CD4-positive, alpha-beta T cell (primary cell): ENCODE measurements at regions of chr1 and their contacts with region 1.

Region 1: GRCh38 chr1:38973659-38974424 is 17.2 kb upstream of the AKIRIN1 start:
- DNase-seq: no peak
- ATAC-seq: no peak
- H3K4me3 ChIP-seq: no peak overlapping the region
- H3K4me3 Mint-ChIP-seq: no peak overlapping the region
- H3K27ac ChIP-seq: no peak overlapping the region
- H3K27ac Mint-ChIP-seq: no peak overlapping the region
- H3K4me1 ChIP-seq: peaks cover 22% of the 10 kb centered on the region
- H3K4me1 Mint-ChIP-seq: peaks cover 17% of the 10 kb centered on the region
- H3K27me3 ChIP-seq: no peaks in the 10 kb centered on the region
- H3K27me3 Mint-ChIP-seq: no peaks in the 10 kb centered on the region
- CTCF ChIP-seq: no peak

Region 2: GRCh38 chr1:38873027-38873969 is 100.5 kb before region 1 on chr1 and contains the start of gene MYCBP:
- CTCF ChIA-PET with region 1: no interaction called
- POLR2A ChIA-PET with region 1: interaction called, 11 read pairs
- intact Hi-C with region 1: no loop called
- DNase-seq: peak; percentile 94 to 99 (median 97)
- ATAC-seq: peak; percentile 99
- H3K4me3 ChIP-seq: peak within 1 kb of the TSS; percentile 71
- H3K4me3 Mint-ChIP-seq: peak within 1 kb of the TSS; percentile 93
- H3K27ac ChIP-seq: peak within 1 kb of the TSS; percentile 13 to 73
- H3K27ac Mint-ChIP-seq: peak within 1 kb of the TSS; percentile 90
- H3K4me1 ChIP-seq: peaks cover 17% of the 10 kb centered on the region
- H3K4me1 Mint-ChIP-seq: peaks cover 34% of the 10 kb centered on the region
- H3K27me3 ChIP-seq: no peaks in the 10 kb centered on the region
- H3K27me3 Mint-ChIP-seq: no peaks in the 10 kb centered on the region
- CTCF ChIP-seq: no peak
- total RNA-seq, gene MYCBP: 1.5 to 2.2 TPM

Region 3: DNA sequence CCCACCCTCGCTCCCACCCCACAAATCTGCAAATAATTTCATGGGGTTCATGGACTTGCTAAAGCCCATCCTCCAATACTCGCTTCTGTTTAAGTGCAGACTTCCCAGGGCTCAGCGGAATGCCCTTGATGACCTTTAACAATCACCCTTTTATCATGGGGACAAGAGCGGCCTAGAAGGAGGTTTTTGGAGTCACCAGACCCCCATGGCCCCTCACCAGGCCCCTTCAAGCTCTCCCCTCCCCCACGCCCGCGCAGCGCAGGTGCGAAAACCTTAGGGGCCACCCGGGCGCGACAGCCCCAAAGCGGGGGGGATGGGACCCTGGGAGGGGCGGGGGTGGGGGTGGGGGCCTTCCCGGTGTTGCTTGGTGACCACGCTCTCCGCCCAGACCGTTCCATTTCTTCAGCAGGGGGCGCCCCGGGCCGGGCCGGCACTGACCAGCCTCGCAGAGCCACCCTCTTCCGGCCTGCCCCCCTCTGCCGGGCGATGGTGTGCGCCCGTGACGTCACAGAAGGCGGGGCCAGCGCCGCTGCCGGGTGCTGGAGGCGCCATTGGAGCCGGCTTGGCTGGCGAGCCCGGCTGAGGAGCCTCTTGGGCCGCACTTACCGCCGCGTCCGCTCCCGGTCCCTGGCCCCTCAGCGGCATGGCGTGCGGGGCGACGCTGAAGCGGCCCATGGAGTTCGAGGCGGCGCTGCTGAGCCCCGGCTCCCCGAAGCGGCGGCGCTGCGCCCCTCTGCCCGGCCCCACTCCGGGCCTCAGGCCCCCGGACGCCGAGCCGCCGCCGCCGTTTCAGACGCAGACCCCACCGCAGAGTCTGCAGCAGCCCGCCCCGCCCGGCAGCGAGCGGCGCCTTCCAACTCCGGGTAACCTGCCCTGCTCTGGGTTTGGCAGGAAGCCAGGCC is 17.1 kb after region 1 on chr1 and contains the start of gene AKIRIN1:
- CTCF ChIA-PET with region 1: interaction called, 4 read pairs
- POLR2A ChIA-PET with region 1: interaction called, 30 read pairs
- intact Hi-C with region 1: loop called (anchors 1 to 2 kb)
- DNase-seq: peak; percentile 82 to 96 (median 92)
- ATAC-seq: peak; percentile 84
- H3K4me3 ChIP-seq: peak within 1 kb of the TSS; percentile 91
- H3K4me3 Mint-ChIP-seq: peak within 1 kb of the TSS; percentile 90
- H3K27ac ChIP-seq: peak within 1 kb of the TSS; percentile 83 to 89
- H3K27ac Mint-ChIP-seq: peak within 1 kb of the TSS; percentile 81
- H3K4me1 ChIP-seq: peaks cover 36% of the 10 kb centered on the region
- H3K4me1 Mint-ChIP-seq: peaks cover 43% of the 10 kb centered on the region
- H3K27me3 ChIP-seq: no peaks in the 10 kb centered on the region
- H3K27me3 Mint-ChIP-seq: no peaks in the 10 kb centered on the region
- CTCF ChIP-seq: no peak
- total RNA-seq, gene AKIRIN1: 108 to 112 TPM

Region 4: GRCh38 chr1:38997034-38997900 is 23.4 kb after region 1 on chr1:
- CTCF ChIA-PET with region 1: interaction called, 4 read pairs
- POLR2A ChIA-PET with region 1: interaction called, 30 read pairs
- intact Hi-C with region 1: loop called in 1 of 2 experiments (anchors 1 kb)
- DNase-seq: peak in 3 of 14 experiments; percentile 38 to 78 (median 42)
- ATAC-seq: peak; percentile 80
- H3K4me3 ChIP-seq: peak overlapping the region; percentile 10
- H3K4me3 Mint-ChIP-seq: peak overlapping the region; percentile 81
- H3K27ac ChIP-seq: peak overlapping the region; percentile 31 to 42
- H3K27ac Mint-ChIP-seq: peak overlapping the region; percentile 87
- H3K4me1 ChIP-seq: peaks cover 57% of the 10 kb centered on the region
- H3K4me1 Mint-ChIP-seq: peaks cover 71% of the 10 kb centered on the region
- H3K27me3 ChIP-seq: no peaks in the 10 kb centered on the region
- H3K27me3 Mint-ChIP-seq: no peaks in the 10 kb centered on the region
- CTCF ChIP-seq: no peak

Region 5: DNA sequence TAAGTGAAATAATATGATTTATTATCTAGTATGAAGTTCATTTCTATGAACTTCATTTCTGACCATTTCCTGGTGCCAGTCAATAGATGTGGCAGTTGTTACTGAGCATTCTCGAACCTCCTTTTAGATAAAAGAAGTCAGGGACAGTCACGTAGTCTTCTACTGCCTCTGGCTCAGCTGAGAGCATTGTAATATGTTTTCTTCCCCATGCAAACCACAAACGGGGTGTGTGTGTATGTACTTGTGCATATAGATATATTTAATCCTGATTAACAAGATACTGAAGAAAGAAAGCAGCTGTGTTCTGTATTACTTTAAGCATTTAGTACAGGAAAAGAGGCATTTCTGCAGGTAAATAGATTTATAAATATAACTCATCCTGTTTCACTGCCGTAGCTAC is 1579.2 kb after region 1 on chr1:
- CTCF ChIA-PET with region 1: no interaction called
- POLR2A ChIA-PET with region 1: no interaction called
- intact Hi-C with region 1: no loop called
- DNase-seq: no peak
- ATAC-seq: no peak
- H3K4me3 ChIP-seq: no peak overlapping the region
- H3K4me3 Mint-ChIP-seq: no peak overlapping the region
- H3K27ac ChIP-seq: no peak overlapping the region
- H3K27ac Mint-ChIP-seq: no peak overlapping the region
- H3K4me1 ChIP-seq: no peaks in the 10 kb centered on the region
- H3K4me1 Mint-ChIP-seq: no peaks in the 10 kb centered on the region
- H3K27me3 ChIP-seq: no peaks in the 10 kb centered on the region
- H3K27me3 Mint-ChIP-seq: peaks cover 3% of the 10 kb centered on the region
- CTCF ChIP-seq: no peak